ENCODE measurements at regions of chr21 and their contacts with region 1.

Region 1: DNA sequence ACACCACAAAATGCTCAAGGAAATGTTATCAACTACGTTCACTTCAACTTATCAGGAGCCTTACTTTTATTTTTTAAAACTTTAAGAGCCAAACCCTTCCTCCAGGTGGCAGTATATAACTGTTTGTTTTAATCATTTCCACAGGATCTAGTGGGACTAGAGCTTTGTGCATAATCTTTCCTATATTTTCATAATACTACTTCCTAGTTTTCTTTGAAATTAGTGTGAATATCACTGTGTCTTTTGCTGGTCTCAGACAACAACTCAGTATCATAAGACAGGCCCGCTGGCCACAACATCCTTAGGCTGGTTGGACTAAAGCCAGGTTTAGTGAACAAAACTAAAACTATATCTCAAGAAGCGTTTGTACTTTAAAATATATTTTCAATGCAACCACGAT is 145.5 kb downstream of the TIAM1 start:
- DNase-seq: no peak
- H3K4me3 ChIP-seq: no peak overlapping the region
- H3K27ac ChIP-seq: no peak overlapping the region
- H3K4me1 ChIP-seq: no peaks in the 10 kb centered on the region
- H3K27me3 ChIP-seq: peaks cover 34% of the 10 kb centered on the region
- CTCF ChIP-seq: peak; percentile 69

Region 2: DNA sequence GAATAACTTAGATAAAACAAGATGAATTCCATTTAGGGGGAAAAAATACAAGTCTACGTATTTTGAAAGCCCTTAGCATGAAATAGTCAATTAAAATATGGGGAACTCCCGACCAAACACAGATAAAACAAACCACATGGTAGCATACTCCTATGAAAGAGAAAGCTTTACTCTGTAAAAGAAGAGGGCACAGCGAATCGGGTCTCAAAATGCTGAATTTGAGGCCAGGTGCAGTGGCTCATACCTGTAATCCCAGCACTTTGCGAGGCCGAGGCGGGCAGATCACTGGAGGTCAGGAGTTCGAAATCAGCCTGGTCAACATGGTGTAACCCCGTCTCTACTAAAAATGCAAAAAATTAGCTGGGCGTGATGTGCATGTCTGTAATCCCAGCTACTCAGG is 262.4 kb after region 1 on chr21:
- intact Hi-C with region 1: no loop called
- DNase-seq: no peak
- H3K4me3 ChIP-seq: no peak overlapping the region
- H3K27ac ChIP-seq: no peak overlapping the region
- H3K4me1 ChIP-seq: no peaks in the 10 kb centered on the region
- H3K27me3 ChIP-seq: no peaks in the 10 kb centered on the region
- CTCF ChIP-seq: no peak

Region 3: DNA sequence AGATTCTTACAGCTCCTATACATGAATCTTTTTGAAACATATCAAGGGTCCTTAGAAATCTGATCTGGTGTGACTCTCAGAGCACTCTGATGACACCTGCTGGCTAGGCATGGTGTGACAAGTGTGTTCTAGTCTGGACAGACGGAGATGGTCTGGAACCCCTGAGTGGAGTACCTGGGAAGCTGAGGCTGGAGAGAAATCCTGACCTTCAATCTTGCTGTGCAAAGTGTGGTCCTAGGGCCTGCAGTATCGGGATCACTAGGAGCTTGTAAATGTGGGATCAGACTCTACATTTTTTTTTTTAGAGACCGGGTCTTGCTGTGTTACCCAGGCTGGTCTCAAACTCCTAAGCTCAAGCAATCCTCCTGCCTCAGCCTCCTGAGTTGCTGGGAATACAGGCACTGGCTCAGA is 382.3 kb after region 1 on chr21:
- intact Hi-C with region 1: loop called (anchors 5 kb)
- DNase-seq: peak; percentile 60
- H3K4me3 ChIP-seq: no peak overlapping the region
- H3K27ac ChIP-seq: no peak overlapping the region
- H3K4me1 ChIP-seq: peaks cover 5% of the 10 kb centered on the region
- H3K27me3 ChIP-seq: peaks cover 62% of the 10 kb centered on the region
- CTCF ChIP-seq: peak; percentile 88

Region 4: GRCh38 chr21:31604591-31605190 is 406.1 kb after region 1 on chr21:
- intact Hi-C with region 1: loop called (anchors 5 kb)
- DNase-seq: peak; percentile 61
- H3K4me3 ChIP-seq: no peak overlapping the region
- H3K27ac ChIP-seq: no peak overlapping the region
- H3K4me1 ChIP-seq: no peaks in the 10 kb centered on the region
- H3K27me3 ChIP-seq: no peaks in the 10 kb centered on the region
- CTCF ChIP-seq: peak; percentile 93